ENCODE measurements at regions of chr1 and their contacts with region 1.

Region 1: GRCh38 chr1:180863158-180863775 is 49.4 kb upstream of the KIAA1614 start:
- DNase-seq: no peak
- ATAC-seq: peak; percentile 70
- H3K4me3 ChIP-seq: no peak overlapping the region
- H3K27ac ChIP-seq: no peak overlapping the region
- H3K4me1 ChIP-seq: no peaks in the 10 kb centered on the region
- H3K27me3 ChIP-seq: no peaks in the 10 kb centered on the region
- CTCF ChIP-seq: peak; percentile 76

Region 2: DNA sequence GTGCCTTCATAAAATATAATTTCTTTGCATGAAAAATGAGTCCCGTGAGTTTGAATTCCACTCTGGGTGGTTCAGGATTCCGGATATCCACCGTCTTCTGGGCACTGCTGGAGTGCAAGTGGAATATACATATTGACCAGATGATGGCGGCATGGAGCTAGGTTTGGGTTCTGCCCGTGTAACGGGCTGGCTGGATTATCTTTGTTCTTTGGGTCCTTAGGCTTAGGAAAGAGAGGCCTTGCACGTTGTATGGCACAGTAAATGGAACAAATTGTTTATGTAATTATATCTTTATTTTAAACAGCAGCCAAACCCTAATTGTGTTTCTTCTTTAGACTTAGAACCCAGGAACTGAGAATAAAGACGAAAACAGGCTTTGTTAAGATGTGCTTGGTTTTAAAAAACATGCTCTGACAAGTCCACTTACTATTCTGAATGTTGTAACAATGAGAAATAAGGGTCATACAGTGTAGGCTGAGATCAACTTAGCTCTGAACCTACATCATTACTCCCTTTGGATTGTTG is 347.3 kb before region 1 on chr1:
- intact Hi-C with region 1: loop called (anchors 5 kb)
- DNase-seq: no peak
- ATAC-seq: peak; percentile 100
- H3K4me3 ChIP-seq: no peak overlapping the region
- H3K27ac ChIP-seq: no peak overlapping the region
- H3K4me1 ChIP-seq: peaks cover 8% of the 10 kb centered on the region
- H3K27me3 ChIP-seq: no peaks in the 10 kb centered on the region
- CTCF ChIP-seq: peak; percentile 87

Region 3: GRCh38 chr1:180631766-180632325 is 231.4 kb before region 1 on chr1 and contains the start of gene XPR1:
- intact Hi-C with region 1: loop called (anchors 10 kb)
- DNase-seq: peak; percentile 99
- ATAC-seq: peak; percentile 100
- H3K4me3 ChIP-seq: peak within 1 kb of the TSS; percentile 97
- H3K27ac ChIP-seq: peak within 1 kb of the TSS; percentile 85
- H3K4me1 ChIP-seq: peaks cover 31% of the 10 kb centered on the region
- H3K27me3 ChIP-seq: no peaks in the 10 kb centered on the region
- CTCF ChIP-seq: peak; percentile 45
- total RNA-seq, gene XPR1: 23.5 TPM